ENCODE measurements at regions of chr12 and their contacts with region 1.

Region 1: GRCh38 chr12:53054112-53054833 is 4.4 kb downstream of the TNS2 start:
- DNase-seq: peak; percentile 97
- ATAC-seq: peak; percentile 96
- H3K4me3 Mint-ChIP-seq: peak overlapping the region; percentile 91
- H3K27ac Mint-ChIP-seq: peak overlapping the region; percentile 90
- H3K4me1 Mint-ChIP-seq: peaks cover 10% of the 10 kb centered on the region
- H3K27me3 Mint-ChIP-seq: no peaks in the 10 kb centered on the region
- CTCF ChIP-seq: no peak

Region 2: GRCh38 chr12:53039851-53040250 is 14.4 kb before region 1 on chr12:
- CTCF ChIA-PET with region 1: interaction called, 25 read pairs
- POLR2A ChIA-PET with region 1: interaction called, 4 read pairs
- intact Hi-C with region 1: no loop called
- DNase-seq: no peak
- ATAC-seq: no peak
- H3K4me3 Mint-ChIP-seq: no peak overlapping the region
- H3K27ac Mint-ChIP-seq: peak overlapping the region; percentile 40
- H3K4me1 Mint-ChIP-seq: peaks cover 19% of the 10 kb centered on the region
- H3K27me3 Mint-ChIP-seq: no peaks in the 10 kb centered on the region
- CTCF ChIP-seq: no peak

Region 3: DNA sequence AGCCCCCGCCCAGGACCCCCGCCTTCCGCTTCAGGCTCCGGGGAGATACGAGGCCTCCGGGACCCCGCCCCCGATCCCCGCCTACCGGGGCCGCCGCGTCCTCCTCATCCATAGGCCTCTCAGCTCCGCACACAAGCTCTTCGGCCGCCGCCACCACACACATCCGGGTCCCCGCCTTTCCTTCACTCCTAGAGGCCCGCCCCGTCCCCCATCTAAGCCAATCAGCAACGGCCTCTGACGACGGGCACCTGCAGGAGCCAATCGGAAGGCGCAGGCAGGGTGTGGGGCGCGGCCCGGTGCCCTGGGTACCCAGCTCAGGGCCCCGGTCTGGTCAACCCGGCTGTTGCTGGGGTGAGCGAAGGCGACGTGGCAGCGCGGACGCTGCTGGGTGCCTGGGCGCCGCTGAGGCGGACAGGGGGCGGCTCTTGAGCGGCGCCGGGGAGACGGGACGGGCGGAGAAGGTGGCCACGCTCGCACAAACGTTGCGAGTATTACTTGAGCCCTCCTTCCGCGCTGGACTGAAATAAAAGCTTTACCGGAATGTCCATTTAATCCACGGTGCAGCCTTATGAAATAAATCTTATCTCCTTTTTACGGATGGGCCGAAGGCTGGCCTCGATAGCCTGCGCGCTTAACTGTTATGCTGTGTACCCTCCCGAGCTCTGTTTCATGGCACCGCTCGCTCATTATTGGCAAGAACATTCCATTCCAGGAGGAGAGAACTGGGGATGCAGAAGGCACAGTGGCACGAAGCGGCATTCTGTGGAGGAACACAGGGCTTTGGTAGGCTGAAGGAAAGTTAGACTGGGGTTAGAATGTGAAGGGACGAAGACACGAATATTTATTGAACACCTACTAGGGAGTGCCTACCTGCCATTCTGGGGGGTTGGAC is 25.2 kb after region 1 on chr12 and contains the start of gene SPRYD3:
- CTCF ChIA-PET with region 1: interaction called, 13 read pairs
- POLR2A ChIA-PET with region 1: interaction called, 15 read pairs
- intact Hi-C with region 1: no loop called
- DNase-seq: peak; percentile 98
- ATAC-seq: peak; percentile 98
- H3K4me3 Mint-ChIP-seq: peak within 1 kb of the TSS; percentile 83
- H3K27ac Mint-ChIP-seq: peak within 1 kb of the TSS; percentile 80
- H3K4me1 Mint-ChIP-seq: peaks cover 34% of the 10 kb centered on the region
- H3K27me3 Mint-ChIP-seq: no peaks in the 10 kb centered on the region
- CTCF ChIP-seq: no peak
- total RNA-seq, gene SPRYD3: 24.8 to 25.0 TPM

Region 4: DNA sequence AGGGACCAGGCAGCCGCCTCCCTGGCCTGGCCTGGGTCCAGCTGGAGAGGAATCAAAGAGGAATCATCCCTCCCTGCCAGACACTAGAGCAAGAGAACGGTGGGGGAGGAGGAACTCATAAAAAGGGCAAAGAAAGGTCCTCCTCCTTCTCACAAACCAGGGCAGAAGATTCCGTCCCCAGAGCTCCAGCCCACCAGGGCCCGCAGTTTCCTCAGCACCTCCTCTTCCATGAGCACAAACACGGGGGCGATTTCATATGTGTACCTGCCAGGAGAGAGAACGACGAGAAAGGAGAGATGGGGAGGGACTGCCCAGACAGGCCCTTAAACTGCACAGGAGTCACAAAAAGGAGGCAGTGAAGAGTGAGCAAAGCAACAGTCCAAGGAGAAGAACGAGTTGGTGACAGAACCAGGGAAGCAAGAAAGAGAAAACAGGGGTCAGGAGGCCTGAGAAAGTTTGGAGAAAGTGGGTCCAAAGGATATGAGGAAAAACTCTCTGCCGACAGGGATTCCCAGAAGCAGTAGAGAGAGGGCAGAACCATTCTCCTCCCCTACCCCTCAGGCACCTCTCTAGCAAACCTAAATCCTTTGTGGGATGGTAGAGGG is 117.6 kb after region 1 on chr12:
- CTCF ChIA-PET with region 1: no interaction called
- POLR2A ChIA-PET with region 1: no interaction called
- intact Hi-C with region 1: no loop called
- DNase-seq: no peak
- ATAC-seq: no peak
- H3K4me3 Mint-ChIP-seq: no peak overlapping the region
- H3K27ac Mint-ChIP-seq: no peak overlapping the region
- H3K4me1 Mint-ChIP-seq: peaks cover 4% of the 10 kb centered on the region
- H3K27me3 Mint-ChIP-seq: no peaks in the 10 kb centered on the region
- CTCF ChIP-seq: no peak

Region 5: DNA sequence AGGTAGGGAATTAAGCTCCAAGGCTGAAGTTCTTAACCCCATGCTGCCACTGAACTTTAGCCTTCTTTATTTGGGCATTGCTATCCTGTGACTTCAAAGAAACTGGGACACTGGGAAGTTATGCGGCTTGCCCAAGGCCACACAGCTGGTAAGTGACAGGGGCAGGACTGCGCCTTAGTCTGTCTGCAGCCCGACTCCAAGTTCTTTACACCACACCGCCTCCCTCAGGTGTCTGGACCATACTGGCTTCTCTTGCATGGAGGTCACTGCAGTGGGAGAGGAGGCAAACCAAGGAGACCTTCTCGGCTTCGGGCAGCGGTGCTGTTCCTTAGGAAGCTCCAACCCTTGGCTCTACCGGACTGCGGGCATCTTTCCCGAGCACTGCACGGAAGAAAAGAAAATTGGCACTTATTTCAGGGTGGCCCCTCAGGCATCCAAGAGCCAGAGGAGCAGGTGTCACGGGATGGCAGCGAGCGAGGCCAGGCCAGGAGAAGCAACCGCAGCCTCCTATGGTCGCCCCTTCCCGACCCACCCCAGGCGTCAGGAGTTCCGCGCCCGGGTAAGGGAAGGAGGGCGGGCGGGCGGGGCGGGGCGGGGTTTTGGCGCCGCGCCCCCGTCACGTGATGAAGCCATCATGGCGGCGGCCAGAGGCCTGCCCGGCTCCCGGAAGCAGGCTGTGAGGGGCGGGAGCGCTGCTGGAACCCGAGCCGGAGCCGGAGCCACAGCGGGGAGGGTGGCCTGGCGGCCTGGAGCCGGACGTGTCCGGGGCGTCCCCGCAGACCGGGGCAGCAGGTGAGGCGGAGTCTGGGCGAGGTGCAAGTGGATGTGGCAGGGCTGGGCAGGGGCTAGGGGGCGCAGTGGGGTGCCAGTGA is 197.4 kb after region 1 on chr12:
- CTCF ChIA-PET with region 1: no interaction called
- POLR2A ChIA-PET with region 1: no interaction called
- intact Hi-C with region 1: no loop called
- DNase-seq: peak; percentile 81
- ATAC-seq: peak; percentile 90
- H3K4me3 Mint-ChIP-seq: peak overlapping the region; percentile 83
- H3K27ac Mint-ChIP-seq: peak overlapping the region; percentile 95
- H3K4me1 Mint-ChIP-seq: peaks cover 39% of the 10 kb centered on the region
- H3K27me3 Mint-ChIP-seq: no peaks in the 10 kb centered on the region
- CTCF ChIP-seq: peak; percentile 47